MCF 10A (cell line): ENCODE measurements at regions of chr1 and their contacts with region 1.

Region 1: GRCh38 chr1:201348211-201348566 is 29.3 kb downstream of the TNNT2 start:
- DNase-seq: peak; percentile 92
- H3K4me3 Mint-ChIP-seq: no peak overlapping the region
- H3K27ac Mint-ChIP-seq: no peak overlapping the region
- H3K4me1 Mint-ChIP-seq: peaks cover 24% of the 10 kb centered on the region
- H3K27me3 Mint-ChIP-seq: peaks cover 10% of the 10 kb centered on the region
- CTCF ChIP-seq: peak; percentile 92

Region 2: GRCh38 chr1:201275041-201275676 is 73.0 kb before region 1 on chr1:
- CTCF ChIA-PET with region 1: interaction called, 19 read pairs
- POLR2A ChIA-PET with region 1: interaction called, 10 read pairs
- intact Hi-C with region 1: no loop called
- DNase-seq: peak; percentile 100
- H3K4me3 Mint-ChIP-seq: no peak overlapping the region
- H3K27ac Mint-ChIP-seq: peak overlapping the region; percentile 79
- H3K4me1 Mint-ChIP-seq: peaks cover 52% of the 10 kb centered on the region
- H3K27me3 Mint-ChIP-seq: no peaks in the 10 kb centered on the region
- CTCF ChIP-seq: no peak

Region 3: DNA sequence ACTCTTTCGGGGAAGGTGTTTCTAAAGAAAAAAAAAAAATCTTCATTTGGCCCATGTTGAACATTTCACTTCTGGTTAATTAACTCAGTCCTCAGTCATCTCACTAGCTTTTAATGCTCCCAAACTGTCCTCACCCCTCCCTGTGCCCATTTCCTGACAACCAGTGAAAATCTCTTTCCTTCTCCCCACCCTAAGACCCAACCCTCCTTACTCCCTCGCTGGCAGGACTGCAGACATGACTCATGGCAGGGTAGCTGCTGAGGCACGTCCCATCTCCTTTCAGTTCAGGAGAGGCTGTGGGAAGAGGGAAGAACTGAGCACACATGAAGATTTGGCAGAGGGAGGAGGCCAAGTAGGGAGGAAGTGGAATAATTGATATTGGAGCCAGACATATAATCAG is 52.3 kb before region 1 on chr1:
- CTCF ChIA-PET with region 1: interaction called, 445 read pairs
- POLR2A ChIA-PET with region 1: interaction called, 159 read pairs
- intact Hi-C with region 1: loop called (anchors 1 kb)
- DNase-seq: peak; percentile 100
- H3K4me3 Mint-ChIP-seq: peak overlapping the region; percentile 42
- H3K27ac Mint-ChIP-seq: peak overlapping the region; percentile 75
- H3K4me1 Mint-ChIP-seq: peaks cover 50% of the 10 kb centered on the region
- H3K27me3 Mint-ChIP-seq: no peaks in the 10 kb centered on the region
- CTCF ChIP-seq: no peak

Region 4: DNA sequence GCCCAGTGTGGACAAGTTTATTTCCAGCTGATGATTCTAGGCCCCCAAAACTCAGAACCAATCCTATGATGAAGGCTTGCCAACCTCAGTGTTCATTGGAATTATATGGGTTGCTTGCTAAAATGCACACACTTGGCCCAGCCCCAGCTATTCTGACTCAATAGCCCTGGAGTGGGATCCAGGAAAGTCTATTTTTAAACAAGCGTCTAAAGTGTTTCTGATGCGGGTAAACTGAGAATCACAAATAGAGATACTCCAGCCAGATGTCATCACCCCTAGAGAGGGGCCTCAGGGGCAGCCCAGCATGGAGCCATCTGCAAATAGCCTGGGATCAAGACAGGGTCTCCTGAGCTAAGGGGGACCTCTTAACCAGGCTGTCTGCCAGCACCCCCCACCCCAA is 18.9 kb before region 1 on chr1:
- CTCF ChIA-PET with region 1: interaction called, 75 read pairs
- POLR2A ChIA-PET with region 1: interaction called, 4 read pairs
- intact Hi-C with region 1: no loop called
- DNase-seq: peak; percentile 76
- H3K4me3 Mint-ChIP-seq: no peak overlapping the region
- H3K27ac Mint-ChIP-seq: no peak overlapping the region
- H3K4me1 Mint-ChIP-seq: peaks cover 11% of the 10 kb centered on the region
- H3K27me3 Mint-ChIP-seq: no peaks in the 10 kb centered on the region
- CTCF ChIP-seq: no peak

Region 5: GRCh38 chr1:201376464-201377374 is 28.5 kb after region 1 on chr1:
- CTCF ChIA-PET with region 1: interaction called, 14 read pairs
- POLR2A ChIA-PET with region 1: no interaction called
- intact Hi-C with region 1: no loop called
- DNase-seq: peak; percentile 80
- H3K4me3 Mint-ChIP-seq: no peak overlapping the region
- H3K27ac Mint-ChIP-seq: no peak overlapping the region
- H3K4me1 Mint-ChIP-seq: no peaks in the 10 kb centered on the region
- H3K27me3 Mint-ChIP-seq: peaks cover 37% of the 10 kb centered on the region
- CTCF ChIP-seq: peak; percentile 67

Region 6: DNA sequence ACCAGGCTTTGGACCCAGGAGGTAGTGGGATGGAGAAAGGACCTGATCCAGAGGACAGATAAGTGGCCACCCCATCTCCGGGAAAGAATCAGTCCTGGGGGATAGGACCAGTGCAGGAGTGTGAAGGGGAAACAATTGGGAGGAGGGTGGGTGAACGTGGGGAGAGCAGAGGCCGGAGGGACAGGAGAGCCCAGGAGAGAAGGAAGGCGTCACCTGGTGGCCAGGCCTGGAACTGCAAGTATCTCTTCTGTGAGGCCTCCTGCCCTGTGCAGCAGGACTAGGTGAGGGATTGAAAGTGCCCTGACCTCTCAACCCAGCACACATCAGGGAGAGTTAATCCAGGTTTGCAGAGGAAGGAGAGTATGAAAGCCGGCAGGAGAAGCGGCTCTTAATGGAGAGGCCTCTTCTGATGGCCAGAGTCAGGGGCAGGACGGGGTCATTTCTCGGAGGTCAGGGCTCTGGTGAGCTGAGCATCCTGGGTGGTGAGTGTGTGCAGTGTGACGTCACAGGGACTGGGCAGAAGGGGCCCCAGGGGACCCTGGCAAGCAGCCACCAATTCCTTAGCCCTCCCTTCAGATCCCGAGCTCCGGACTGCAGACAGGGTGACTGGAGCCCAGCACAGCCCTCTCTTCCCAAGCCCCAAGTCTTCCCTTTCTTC is 60.1 kb after region 1 on chr1:
- CTCF ChIA-PET with region 1: interaction called, 5 read pairs
- POLR2A ChIA-PET with region 1: interaction called, 3 read pairs
- intact Hi-C with region 1: loop called (anchors 1 kb)
- DNase-seq: peak; percentile 90
- H3K4me3 Mint-ChIP-seq: no peak overlapping the region
- H3K27ac Mint-ChIP-seq: no peak overlapping the region
- H3K4me1 Mint-ChIP-seq: peaks cover 5% of the 10 kb centered on the region
- H3K27me3 Mint-ChIP-seq: peaks cover 32% of the 10 kb centered on the region
- CTCF ChIP-seq: peak; percentile 100

Region 7: GRCh38 chr1:201538612-201539551 is 190.7 kb after region 1 on chr1 and contains the start of gene NAV1:
- CTCF ChIA-PET with region 1: no interaction called
- POLR2A ChIA-PET with region 1: no interaction called
- intact Hi-C with region 1: no loop called
- DNase-seq: peak; percentile 56
- H3K4me3 Mint-ChIP-seq: peak within 1 kb of the TSS; percentile 70
- H3K27ac Mint-ChIP-seq: no peak within 1 kb of the TSS
- H3K4me1 Mint-ChIP-seq: peaks cover 35% of the 10 kb centered on the region
- H3K27me3 Mint-ChIP-seq: no peaks in the 10 kb centered on the region
- CTCF ChIP-seq: no peak
- total RNA-seq, gene NAV1: 31.4 and 34.9 TPM in 2 replicates

Region 8: DNA sequence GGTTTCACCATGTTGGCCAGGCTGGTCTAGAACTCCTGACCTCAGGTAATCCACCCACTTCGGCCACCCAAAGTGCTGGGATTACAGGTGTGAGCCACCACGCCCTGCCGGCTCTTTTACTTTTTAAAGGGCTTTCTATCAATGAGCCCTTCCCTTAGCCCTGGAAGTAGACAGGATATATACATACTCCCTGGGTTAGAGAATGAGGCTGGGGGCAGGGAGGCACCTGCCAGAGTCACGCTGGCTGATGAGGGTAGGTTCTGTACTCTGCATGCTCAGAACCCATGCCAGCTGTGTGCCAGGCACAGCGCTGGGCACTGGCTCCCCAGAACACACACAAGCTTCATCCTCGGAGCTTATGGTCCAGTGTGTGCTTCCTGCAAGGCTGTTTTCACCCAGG is 367.2 kb after region 1 on chr1:
- CTCF ChIA-PET with region 1: no interaction called
- POLR2A ChIA-PET with region 1: no interaction called
- intact Hi-C with region 1: no loop called
- DNase-seq: no peak
- H3K4me3 Mint-ChIP-seq: no peak overlapping the region
- H3K27ac Mint-ChIP-seq: peak overlapping the region; percentile 98
- H3K4me1 Mint-ChIP-seq: peaks cover 52% of the 10 kb centered on the region
- H3K27me3 Mint-ChIP-seq: no peaks in the 10 kb centered on the region
- CTCF ChIP-seq: no peak